ENCODE measurements at regions of chr12 and their contacts with region 1.

Region 1: GRCh38 chr12:19010087-19010486 is 119.4 kb upstream of the PLEKHA5 start:
- DNase-seq: no peak

Region 2: GRCh38 chr12:18970603-18971002 is 39.5 kb before region 1 on chr12:
- intact Hi-C with region 1: no loop called
- DNase-seq: no peak

Region 3: DNA sequence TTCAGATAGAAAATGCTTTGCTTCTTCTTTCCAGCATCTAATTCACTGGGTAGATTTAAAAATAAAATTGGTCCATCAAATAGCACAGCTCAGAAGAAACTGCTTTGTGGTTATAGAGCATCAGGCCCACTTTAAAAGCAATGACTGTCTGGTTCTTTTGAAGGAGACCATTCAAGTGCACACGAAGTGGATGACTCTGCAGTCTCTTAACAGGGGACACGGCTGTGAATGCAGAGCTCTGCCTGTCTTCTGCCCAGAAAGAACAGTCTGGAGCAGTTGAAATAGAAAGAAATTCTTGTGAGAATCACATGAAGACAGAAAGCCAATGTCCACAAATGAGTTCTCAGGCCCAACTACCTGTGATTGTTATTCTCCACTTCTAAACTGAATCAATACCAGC is 19.2 kb before region 1 on chr12:
- intact Hi-C with region 1: loop called (anchors 2 kb)
- DNase-seq: no peak

Region 4: GRCh38 chr12:19048943-19049342 is 38.9 kb after region 1 on chr12:
- intact Hi-C with region 1: no loop called
- DNase-seq: no peak

Measured in cardiac septum (tissue), 1 donor.